ENCODE measurements at regions of chr16 and their contacts with region 1.

Region 1: DNA sequence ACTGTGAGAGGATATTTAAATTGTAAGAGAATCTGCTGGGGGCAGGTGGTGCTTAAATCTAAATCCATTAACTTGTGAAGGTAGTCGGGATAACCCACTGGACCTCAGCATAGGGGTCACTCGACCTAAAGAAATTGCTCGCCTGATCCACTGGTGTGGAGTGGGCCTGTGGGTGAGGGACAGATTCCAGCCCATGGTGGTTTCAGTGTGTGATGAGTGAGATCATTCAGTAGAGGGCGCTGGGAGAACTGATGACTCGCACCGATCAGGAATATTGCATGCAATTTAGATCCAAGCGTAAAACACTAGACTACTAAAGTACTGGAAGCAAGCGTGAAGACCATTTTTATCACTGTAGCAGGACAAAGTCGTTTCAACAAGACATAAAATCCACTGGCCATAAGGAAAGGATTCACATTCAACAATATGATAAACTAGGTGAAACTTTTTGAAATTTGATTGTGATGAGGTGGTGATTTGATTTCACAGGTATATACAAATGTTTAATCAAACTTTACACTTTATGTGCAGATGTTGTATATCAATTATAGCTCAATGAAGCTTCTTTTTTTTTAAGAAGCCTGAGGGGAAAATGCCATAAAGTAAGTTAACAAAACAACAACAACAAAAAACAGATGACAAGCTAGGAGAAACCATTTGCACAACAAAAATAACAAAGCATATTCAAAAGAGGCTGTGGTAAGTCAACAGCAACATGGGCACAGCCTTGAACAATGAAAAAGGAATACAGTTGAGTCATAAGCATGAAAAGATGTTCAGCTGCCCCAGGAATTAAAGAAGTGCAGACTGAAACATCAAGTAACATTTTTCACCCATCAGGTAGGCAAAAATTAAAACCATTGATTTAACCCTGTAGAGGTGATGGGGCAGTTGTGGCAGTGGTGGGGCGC is 7.5 kb upstream of the TMEM170A start:
- DNase-seq: peak; percentile 71

Region 2: GRCh38 chr16:75198135-75198600 is 273.8 kb before region 1 on chr16:
- intact Hi-C with region 1: no loop called
- DNase-seq: peak; percentile 67

Region 3: DNA sequence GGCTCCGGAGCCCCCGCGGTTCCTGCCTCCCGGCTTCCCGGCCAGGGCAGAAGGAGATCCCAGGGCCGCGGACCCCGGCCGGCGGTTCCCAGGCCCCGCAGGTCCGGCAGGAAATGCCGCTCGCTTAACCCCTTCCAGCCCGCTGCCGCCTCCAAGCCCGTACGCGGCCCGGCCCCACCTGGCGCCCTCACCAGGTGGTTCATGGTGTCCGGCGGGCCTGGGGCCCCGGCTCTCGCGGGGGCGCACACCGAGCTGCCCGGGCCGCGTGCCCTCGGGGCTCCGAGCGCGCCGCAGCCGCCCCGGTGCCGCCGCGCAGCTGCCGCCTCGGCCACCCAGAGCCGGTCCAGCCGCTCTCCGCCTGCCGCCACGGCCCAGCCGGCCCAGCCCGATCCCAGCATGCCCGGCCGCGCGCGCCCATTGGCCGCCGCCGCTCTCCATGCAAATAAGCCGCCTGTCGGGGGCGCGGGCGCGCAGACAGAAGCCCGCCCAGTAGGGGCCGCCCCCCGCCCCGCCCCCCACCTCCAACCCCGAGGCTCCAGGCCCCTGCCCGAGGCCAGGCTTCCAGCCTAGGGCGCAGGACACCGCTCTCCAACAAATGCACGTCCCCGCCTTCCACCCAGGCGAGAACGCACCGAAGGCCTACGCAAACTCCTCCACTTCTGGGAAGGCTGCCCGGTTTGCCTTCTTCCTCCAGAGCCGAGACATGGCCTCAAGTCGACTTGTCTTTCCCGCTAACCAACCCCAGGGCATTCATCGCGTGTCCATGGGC is 220.5 kb before region 1 on chr16 and contains the start of gene BCAR1:
- intact Hi-C with region 1: no loop called
- DNase-seq: peak; percentile 93
- total RNA-seq, gene BCAR1: 48.7 to 104 TPM

Region 4: GRCh38 chr16:75764154-75764768 is 292.3 kb after region 1 on chr16:
- intact Hi-C with region 1: loop called in 1 of 2 experiments (anchors 10 kb)
- DNase-seq: no peak